ENCODE measurements at regions of chr18 and their contacts with region 1.

Region 1: DNA sequence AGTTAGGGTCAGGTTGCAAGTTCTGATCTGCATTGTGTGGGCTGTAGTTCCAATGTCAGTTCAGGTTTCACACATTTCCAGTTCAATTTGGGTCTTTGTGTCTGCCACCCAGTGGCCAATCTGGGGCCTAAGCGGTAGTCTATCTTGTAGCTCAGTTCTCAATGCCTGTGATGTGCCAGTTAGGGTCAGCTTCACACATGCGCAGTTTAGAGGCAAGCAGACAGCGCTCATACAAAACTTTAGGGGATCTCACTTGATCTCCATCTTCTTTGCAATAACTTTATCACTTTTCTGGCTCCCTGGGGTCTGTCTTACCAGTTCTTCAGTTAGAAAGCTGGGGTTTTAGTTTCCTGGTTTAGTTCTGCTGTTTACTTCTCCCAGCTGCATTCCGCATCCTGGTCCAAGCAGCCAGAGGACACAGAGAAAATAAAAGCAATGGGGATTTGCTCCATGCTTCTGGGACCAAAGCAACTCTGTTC is 11.0 kb upstream of the ZNF24 start:
- DNase-seq: peak; percentile 90 to 96 (median 93)
- H3K4me3 ChIP-seq: peak overlapping the region in 1 of 7 experiments; percentile 38
- H3K27ac ChIP-seq: no peak overlapping the region
- H3K4me1 ChIP-seq: peaks cover 0 to 2% (median 0%) of the 10 kb centered on the region in 4 experiments
- H3K27me3 ChIP-seq: no peaks in the 10 kb centered on the region

Region 2: GRCh38 chr18:35343936-35344735 is 11.0 kb before region 1 on chr18 and contains the start of gene ZNF24:
- CTCF ChIA-PET with region 1: interaction called, 28 read pairs
- POLR2A ChIA-PET with region 1: no interaction called
- DNase-seq: peak; percentile 93 to 97 (median 97)
- H3K4me3 ChIP-seq: peak within 1 kb of the TSS; percentile 62 to 94 (median 83)
- H3K27ac ChIP-seq: peak within 1 kb of the TSS; percentile 99
- H3K4me1 ChIP-seq: peaks cover 8 to 21% (median 17%) of the 10 kb centered on the region in 4 experiments
- H3K27me3 ChIP-seq: no peaks in the 10 kb centered on the region